Activated T-helper 1 cell treated with anti-CD3 and anti-CD28 coated beads, Interleukin-12 subunit alpha, Interleukin-12 subunit beta, Interleukin-2, Interleukin-4 antibody, amounts not matched to agents 30 ng/mL and 10 ng/mL and 1 ng/mL, durations not matched to agents 14 hours and 24 hours and 36 hours (primary cell): ENCODE measurements at regions of chr21 and their contacts with region 1.

Region 1: GRCh38 chr21:37407719-37408420 is 41.3 kb downstream of the DYRK1A start:
- DNase-seq: no peak
- H3K4me3 Mint-ChIP-seq: no peak overlapping the region
- H3K27ac Mint-ChIP-seq: peak overlapping the region; percentile 79
- H3K4me1 Mint-ChIP-seq: peaks cover 74% of the 10 kb centered on the region
- H3K27me3 Mint-ChIP-seq: no peaks in the 10 kb centered on the region

Region 2: DNA sequence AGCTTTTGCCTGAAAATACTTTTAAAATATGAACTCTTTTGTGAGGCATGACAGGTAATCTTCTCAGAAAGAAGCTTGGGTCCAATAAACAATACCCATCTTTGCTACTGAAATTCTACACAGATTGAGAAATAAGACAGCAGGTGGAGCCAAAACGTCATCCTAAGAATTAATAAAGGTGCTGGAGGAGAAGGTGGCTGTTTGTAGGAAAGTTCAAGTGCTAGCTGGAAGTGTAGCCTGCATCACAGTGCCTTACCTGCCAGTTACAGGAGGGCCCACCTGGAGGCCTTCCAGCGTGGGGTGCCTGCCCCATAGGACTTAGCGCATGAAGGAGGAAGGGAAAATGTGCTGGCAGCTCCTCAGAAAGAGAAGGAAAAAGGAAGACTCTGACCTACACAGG is 241.1 kb before region 1 on chr21:
- intact Hi-C with region 1: no loop called
- DNase-seq: no peak
- H3K4me3 Mint-ChIP-seq: no peak overlapping the region
- H3K27ac Mint-ChIP-seq: peak overlapping the region; percentile 50
- H3K4me1 Mint-ChIP-seq: peaks cover 10% of the 10 kb centered on the region
- H3K27me3 Mint-ChIP-seq: no peaks in the 10 kb centered on the region

Region 3: GRCh38 chr21:37445228-37445627 is 37.4 kb after region 1 on chr21:
- intact Hi-C with region 1: loop called (anchors 5 kb)
- DNase-seq: no peak
- H3K4me3 Mint-ChIP-seq: no peak overlapping the region
- H3K27ac Mint-ChIP-seq: no peak overlapping the region
- H3K4me1 Mint-ChIP-seq: peaks cover 56% of the 10 kb centered on the region
- H3K27me3 Mint-ChIP-seq: no peaks in the 10 kb centered on the region

Region 4: DNA sequence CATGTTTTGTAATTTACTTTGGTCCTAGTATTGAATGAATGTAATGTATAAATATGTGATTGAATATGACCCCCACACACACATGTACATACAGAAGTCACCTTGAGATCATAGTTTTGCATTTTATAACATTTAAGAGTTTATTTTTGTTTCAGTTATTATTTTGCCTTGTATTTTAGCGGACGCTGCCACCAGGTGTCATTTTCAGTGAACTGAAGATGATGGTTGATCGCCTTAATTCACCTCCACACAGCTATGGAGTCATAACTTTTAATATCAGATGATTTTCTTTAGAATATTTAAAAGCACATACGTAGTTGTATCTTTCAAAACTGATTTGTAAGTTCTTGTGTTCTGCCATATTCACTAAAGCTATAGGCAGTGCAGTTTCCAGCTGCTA is 89.1 kb after region 1 on chr21:
- intact Hi-C with region 1: no loop called
- DNase-seq: no peak
- H3K4me3 Mint-ChIP-seq: no peak overlapping the region
- H3K27ac Mint-ChIP-seq: no peak overlapping the region
- H3K4me1 Mint-ChIP-seq: peaks cover 11% of the 10 kb centered on the region
- H3K27me3 Mint-ChIP-seq: no peaks in the 10 kb centered on the region